ENCODE measurements at regions of chr3 and their contacts with region 1.

Region 1: GRCh38 chr3:98154686-98155085 is 7.4 kb downstream of the OR5H14 start:
- DNase-seq: no peak
- ATAC-seq: no peak

Region 2: DNA sequence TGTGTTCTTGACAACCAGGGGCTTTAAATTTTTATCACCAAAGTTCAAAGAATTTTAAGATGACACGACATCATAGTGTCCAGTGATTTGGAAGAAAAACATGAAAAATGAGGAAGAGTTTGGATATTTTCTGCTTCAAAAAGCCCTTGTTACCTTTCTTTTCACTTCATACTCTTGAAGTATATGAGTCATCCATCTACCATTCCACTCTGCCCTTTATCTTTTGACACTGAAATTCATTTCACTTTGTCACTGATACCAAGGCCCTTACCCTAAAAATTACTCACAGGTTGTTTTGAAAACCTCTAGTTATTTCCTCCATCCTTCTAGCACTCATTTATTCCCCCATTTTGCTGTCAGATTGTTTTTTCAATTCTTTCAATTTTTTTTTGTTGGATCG is 54.6 kb after region 1 on chr3:
- intact Hi-C with region 1: loop called (anchors 2 kb)
- DNase-seq: no peak
- ATAC-seq: no peak

Region 3: DNA sequence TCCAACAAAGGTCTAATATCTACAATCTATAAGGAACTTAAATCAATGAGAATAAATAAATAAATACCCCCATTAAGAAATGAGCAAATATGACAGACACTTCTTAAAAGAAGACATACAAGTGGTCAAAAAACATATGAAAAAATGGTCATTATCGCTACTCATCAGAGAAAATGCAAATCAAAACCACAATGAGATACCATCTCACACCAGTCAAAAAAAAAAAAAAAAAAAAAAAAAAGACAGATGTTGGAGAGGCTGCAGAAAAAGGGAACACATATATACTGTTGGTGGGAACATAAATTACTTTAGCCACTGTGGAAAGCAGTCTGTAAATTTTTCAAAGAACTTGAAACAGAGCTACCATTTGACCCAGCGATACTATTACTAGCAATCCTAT is 77.8 kb after region 1 on chr3:
- intact Hi-C with region 1: no loop called
- DNase-seq: no peak
- ATAC-seq: no peak

Measured in left ventricle myocardium superior (tissue), 1 donor.